Activated naive CD4-positive, alpha-beta T cell treated with anti-CD3 and anti-CD28 coated beads for 36 hours (primary cell): ENCODE measurements at regions of chr1 and their contacts with region 1.

Region 1: GRCh38 chr1:154324669-154325582 is at the start of gene ATP8B2:
- DNase-seq: peak; percentile 90
- H3K4me3 Mint-ChIP-seq: peak within 1 kb of the TSS; percentile 98
- H3K27ac Mint-ChIP-seq: peak within 1 kb of the TSS; percentile 94
- H3K4me1 Mint-ChIP-seq: peaks cover 37% of the 10 kb centered on the region
- H3K27me3 Mint-ChIP-seq: no peaks in the 10 kb centered on the region
- total RNA-seq, gene ATP8B2: 28.2 to 28.7 TPM

Region 2: DNA sequence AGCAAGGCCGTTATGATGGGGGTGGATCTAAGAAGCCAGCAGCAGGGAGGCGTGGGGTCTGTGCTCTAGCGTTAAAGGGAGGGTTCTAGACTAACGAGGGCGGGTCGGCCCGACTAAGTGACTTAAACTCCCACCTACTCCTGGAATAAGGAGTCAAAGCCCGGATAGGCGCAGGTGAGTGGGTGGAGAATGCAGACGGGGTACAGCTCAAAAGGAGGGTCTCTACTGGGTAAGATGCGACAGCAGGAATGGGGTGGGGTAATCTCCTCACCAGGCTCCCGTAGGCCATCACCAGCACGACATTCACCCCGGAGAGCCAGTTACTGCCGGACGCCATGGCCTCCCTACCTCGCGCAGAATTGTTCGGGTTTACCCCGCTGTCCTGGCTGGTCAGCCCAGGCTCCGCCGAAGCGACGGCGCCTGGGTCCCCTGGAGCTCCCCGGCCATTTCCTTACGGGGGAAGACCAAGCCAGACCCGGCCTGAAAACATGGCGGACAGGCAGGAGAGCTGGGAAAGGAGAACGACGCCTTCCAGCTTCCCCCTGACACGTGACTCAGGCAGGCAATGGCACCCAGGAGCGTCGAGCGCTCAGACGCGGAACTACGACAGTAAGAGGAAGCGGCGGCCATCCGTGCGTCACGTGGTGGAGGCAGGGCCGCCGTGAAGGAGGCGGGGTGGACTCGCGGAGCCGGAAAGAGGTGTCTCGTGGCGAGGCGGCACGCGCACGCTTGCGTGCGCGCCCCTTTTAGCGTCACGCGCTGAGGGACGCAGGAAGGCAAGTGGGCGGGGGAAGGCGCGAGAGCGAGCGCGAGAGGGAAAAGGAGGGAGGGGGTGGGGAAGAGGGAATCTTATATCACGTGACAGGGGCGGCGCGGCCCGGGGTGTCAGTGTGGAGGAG is 104.6 kb before region 1 on chr1 and contains the start of gene UBAP2L:
- CTCF ChIA-PET with region 1: no interaction called
- intact Hi-C with region 1: loop called (anchors 1 kb)
- DNase-seq: peak; percentile 99
- H3K4me3 Mint-ChIP-seq: peak within 1 kb of the TSS; percentile 96
- H3K27ac Mint-ChIP-seq: peak within 1 kb of the TSS; percentile 98
- H3K4me1 Mint-ChIP-seq: peaks cover 72% of the 10 kb centered on the region
- H3K27me3 Mint-ChIP-seq: no peaks in the 10 kb centered on the region
- total RNA-seq, gene UBAP2L: 154 to 164 TPM

Region 3: GRCh38 chr1:154304664-154305337 is 20.1 kb before region 1 on chr1:
- CTCF ChIA-PET with region 1: interaction called, 3 read pairs
- intact Hi-C with region 1: loop called (anchors 2 kb)
- DNase-seq: peak; percentile 74
- H3K4me3 Mint-ChIP-seq: no peak overlapping the region
- H3K27ac Mint-ChIP-seq: no peak overlapping the region
- H3K4me1 Mint-ChIP-seq: peaks cover 15% of the 10 kb centered on the region
- H3K27me3 Mint-ChIP-seq: no peaks in the 10 kb centered on the region

Region 4: GRCh38 chr1:154344977-154345837 is 20.3 kb after region 1 on chr1:
- CTCF ChIA-PET with region 1: interaction called, 234 read pairs
- intact Hi-C with region 1: loop called (anchors 1 kb)
- DNase-seq: peak; percentile 86
- H3K4me3 Mint-ChIP-seq: peak overlapping the region; percentile 33
- H3K27ac Mint-ChIP-seq: peak overlapping the region; percentile 68
- H3K4me1 Mint-ChIP-seq: peaks cover 72% of the 10 kb centered on the region
- H3K27me3 Mint-ChIP-seq: no peaks in the 10 kb centered on the region

Region 5: DNA sequence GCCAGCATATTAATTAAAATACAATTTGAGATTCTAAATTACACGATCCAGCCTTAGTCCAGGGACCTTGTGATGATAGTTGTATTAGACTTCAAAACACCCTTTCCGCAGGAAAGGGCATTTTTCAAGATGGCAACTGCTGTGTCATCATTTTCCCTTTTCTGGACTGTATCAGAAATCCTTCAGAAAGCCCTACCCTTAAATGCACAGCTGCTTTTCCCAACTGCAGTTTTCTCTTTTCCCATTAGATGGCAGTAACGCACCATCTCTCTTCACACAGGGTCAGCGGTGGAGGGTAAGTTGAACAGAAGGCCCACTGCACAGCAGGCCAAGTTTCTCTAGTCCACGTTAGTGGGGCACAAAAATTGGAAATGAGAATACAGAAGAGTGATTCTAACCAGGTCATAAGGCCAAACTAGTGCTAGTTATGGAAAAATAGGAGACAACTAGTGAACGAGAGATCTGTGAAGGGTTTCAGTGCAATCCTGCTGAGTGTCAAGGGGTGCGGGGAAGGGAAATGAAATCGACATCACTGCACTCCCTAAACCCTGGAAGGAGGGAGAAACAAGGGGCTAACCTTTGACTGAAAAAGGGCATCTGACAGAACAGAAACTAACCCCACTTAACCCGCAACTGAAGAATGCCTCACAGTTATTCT is 155.0 kb after region 1 on chr1:
- CTCF ChIA-PET with region 1: interaction called, 4 read pairs
- intact Hi-C with region 1: loop called (anchors 2 kb)
- DNase-seq: peak; percentile 73
- H3K4me3 Mint-ChIP-seq: no peak overlapping the region
- H3K27ac Mint-ChIP-seq: no peak overlapping the region
- H3K4me1 Mint-ChIP-seq: peaks cover 28% of the 10 kb centered on the region
- H3K27me3 Mint-ChIP-seq: no peaks in the 10 kb centered on the region

Region 6: GRCh38 chr1:154936555-154937084 is 611.7 kb after region 1 on chr1 and contains the start of gene PMVK:
- CTCF ChIA-PET with region 1: no interaction called
- intact Hi-C with region 1: loop called (anchors 5 kb)
- DNase-seq: peak; percentile 97
- H3K4me3 Mint-ChIP-seq: peak within 1 kb of the TSS; percentile 83
- H3K27ac Mint-ChIP-seq: peak within 1 kb of the TSS; percentile 97
- H3K4me1 Mint-ChIP-seq: peaks cover 47% of the 10 kb centered on the region
- H3K27me3 Mint-ChIP-seq: no peaks in the 10 kb centered on the region
- total RNA-seq, gene PMVK: 29.8 to 30.5 TPM